ENCODE measurements at regions of chr1 and their contacts with region 1.

Region 1: DNA sequence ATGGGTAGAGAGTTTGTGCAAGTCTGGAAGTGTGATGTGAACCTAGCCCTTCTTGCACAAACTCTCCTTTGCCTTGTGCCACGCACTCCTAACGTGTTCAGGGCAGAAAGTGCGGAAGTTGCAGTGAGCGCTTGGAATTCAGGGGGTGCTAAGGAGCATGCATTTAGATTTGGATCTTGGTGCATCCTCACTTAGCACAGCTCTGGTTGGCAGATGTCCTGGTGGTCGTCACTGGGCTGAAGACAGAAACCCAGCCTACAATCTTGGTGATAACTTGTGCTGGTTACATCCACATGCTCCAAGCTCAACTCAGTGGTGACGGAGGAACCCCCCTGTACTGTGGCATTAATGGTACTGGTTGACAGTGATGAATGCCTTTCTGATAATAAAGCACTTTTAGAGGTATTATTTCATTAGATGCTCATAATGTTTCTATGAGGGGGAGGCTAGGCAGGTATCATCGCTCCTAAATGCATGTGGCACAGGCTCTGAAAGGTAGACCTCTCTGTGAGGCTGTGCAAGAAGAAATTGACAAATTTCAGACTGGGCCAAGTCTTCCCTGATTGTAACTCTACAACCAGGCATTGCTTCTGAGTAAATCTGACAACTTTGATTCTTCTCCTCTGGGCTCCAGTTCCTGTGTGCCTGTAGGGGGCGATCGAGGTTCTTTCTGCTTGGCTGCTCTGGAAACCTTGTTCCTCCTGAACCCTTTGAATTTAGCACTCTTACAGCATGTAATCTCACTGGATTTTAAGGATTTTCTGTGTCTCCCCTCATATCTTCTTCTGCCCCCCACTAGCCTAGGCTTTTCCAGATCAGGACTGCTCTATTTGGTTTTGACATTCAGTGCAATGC is 40.6 kb downstream of the MAPKAPK2 start:
- H3K4me3 ChIP-seq: no peak overlapping the region
- H3K27ac ChIP-seq: no peak overlapping the region
- H3K4me1 ChIP-seq: no peaks in the 10 kb centered on the region; the same call in 1 of the 2 replicates
- CTCF ChIP-seq: no peak

Region 2: GRCh38 chr1:206635080-206635977 is 90.0 kb before region 1 on chr1 and contains the start of gene DYRK3:
- CTCF ChIA-PET with region 1: interaction called, 12 read pairs
- POLR2A ChIA-PET with region 1: no interaction called
- H3K4me3 ChIP-seq: peak within 1 kb of the TSS; percentile 88
- H3K27ac ChIP-seq: peak within 1 kb of the TSS; percentile 56; the same call in 1 of the 2 replicates
- H3K4me1 ChIP-seq: peaks cover 11% of the 10 kb centered on the region
- CTCF ChIP-seq: peak; percentile 70

Region 3: DNA sequence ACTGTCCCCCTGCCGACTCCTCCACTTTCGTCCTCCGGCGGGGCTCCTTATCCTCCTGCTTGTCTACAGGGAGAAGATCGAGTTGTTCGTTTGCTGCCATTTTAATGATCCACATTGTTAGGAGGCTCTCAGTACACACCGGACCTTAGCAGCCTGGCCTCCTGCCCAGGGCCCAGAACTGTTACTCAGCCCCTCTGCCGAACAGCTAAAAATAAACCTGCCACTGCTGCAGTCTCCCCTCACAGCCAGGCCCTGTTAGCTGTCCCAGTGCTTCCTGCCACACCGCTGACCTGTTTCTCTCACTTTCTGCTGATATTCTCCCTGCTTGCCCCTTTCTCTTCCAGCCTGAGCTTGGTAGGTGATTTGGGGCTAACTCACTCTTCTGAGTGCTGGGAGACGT is 32.3 kb before region 1 on chr1:
- CTCF ChIA-PET with region 1: interaction called, 32 read pairs
- POLR2A ChIA-PET with region 1: no interaction called
- H3K4me3 ChIP-seq: no peak overlapping the region
- H3K27ac ChIP-seq: no peak overlapping the region
- H3K4me1 ChIP-seq: no peaks in the 10 kb centered on the region; the same call in 1 of the 2 replicates
- CTCF ChIP-seq: no peak

Region 4: GRCh38 chr1:206709772-206710459 is 15.4 kb before region 1 on chr1:
- CTCF ChIA-PET with region 1: interaction called, 62 read pairs
- POLR2A ChIA-PET with region 1: no interaction called
- H3K4me3 ChIP-seq: no peak overlapping the region
- H3K27ac ChIP-seq: no peak overlapping the region
- H3K4me1 ChIP-seq: peaks cover 32% of the 10 kb centered on the region
- CTCF ChIP-seq: no peak

Region 5: GRCh38 chr1:206808615-206809014 is 83.3 kb after region 1 on chr1:
- CTCF ChIA-PET with region 1: interaction called, 16 read pairs
- POLR2A ChIA-PET with region 1: no interaction called
- H3K4me3 ChIP-seq: no peak overlapping the region
- H3K27ac ChIP-seq: no peak overlapping the region
- H3K4me1 ChIP-seq: no peaks in the 10 kb centered on the region
- CTCF ChIP-seq: no peak; the same call in 1 of the 2 replicates

Region 6: DNA sequence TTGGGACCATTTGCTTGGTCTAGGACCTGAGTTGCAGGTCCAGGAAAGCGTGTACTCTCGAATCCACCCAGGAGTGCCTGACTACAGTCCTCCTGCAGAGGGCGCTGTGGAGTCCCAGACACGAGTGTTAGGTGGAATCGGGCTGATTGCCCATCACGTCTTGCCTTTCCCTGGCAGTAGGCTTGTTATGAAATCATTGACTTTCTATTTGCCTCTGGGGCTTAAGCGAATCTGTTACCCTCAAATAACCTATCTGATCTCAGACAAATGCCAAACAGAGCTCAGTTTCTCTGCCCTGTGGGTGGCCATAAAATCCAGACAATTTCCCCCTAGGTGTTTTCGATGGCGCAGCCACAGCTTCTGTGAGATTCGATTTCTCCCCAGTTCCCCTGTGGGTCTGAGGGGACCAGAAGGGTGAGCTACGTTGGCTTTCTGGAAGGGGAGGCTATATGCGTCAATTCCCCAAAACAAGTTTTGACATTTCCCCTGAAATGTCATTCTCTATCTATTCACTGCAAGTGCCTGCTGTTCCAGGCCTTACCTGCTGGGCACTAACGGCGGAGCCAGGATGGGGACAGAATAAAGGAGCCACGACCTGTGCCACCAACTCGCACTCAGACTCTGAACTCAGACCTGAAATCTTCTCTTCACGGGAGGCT is 139.8 kb after region 1 on chr1 and contains the start of gene IL20:
- CTCF ChIA-PET with region 1: interaction called, 13 read pairs
- POLR2A ChIA-PET with region 1: no interaction called
- H3K4me3 ChIP-seq: no peak within 1 kb of the TSS
- H3K27ac ChIP-seq: no peak within 1 kb of the TSS
- H3K4me1 ChIP-seq: no peaks in the 10 kb centered on the region
- CTCF ChIP-seq: peak; percentile 68